ENCODE measurements at regions of chr2 and their contacts with region 1.

Region 1: DNA sequence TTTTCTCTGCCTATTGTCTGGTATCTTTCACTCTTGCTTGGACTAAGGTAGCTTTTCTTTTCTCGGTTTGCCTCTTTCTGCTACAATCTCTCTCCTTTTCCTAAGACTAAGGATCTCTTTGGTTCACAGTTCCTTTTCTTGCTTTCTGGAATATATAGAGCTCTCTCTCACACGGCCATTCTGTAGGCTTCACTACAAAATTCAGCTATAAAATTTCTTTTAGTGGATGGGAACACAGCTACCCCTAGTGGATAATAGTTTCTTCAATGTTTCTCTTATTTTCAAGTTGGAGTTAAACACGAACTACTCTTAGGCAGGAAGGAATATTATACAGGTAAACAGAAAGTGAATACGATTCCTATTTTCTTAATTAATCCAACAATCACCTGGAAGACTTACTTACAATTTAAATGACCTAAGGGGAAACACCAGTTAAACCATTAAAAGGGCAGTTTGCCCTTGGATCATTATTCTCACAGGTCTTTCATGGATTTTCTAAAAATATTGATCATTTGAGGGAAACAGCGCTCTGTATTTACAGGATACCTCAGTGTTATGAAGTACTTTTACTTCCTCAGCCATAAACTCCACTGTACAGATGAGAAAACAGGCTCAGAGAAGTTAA is 140.5 kb downstream of the LRP2 start:
- DNase-seq: no peak
- H3K4me3 Mint-ChIP-seq: no peak overlapping the region
- H3K27ac Mint-ChIP-seq: no peak overlapping the region
- H3K4me1 Mint-ChIP-seq: no peaks in the 10 kb centered on the region
- H3K27me3 Mint-ChIP-seq: no peaks in the 10 kb centered on the region
- CTCF ChIP-seq: peak; percentile 23

Region 2: GRCh38 chr2:169141713-169142352 is 80.0 kb before region 1 on chr2:
- CTCF ChIA-PET with region 1: interaction called, 6 read pairs
- intact Hi-C with region 1: loop called (anchors 5 kb)
- DNase-seq: peak; percentile 78
- H3K4me3 Mint-ChIP-seq: no peak overlapping the region
- H3K27ac Mint-ChIP-seq: no peak overlapping the region
- H3K4me1 Mint-ChIP-seq: peaks cover 7% of the 10 kb centered on the region
- H3K27me3 Mint-ChIP-seq: no peaks in the 10 kb centered on the region
- CTCF ChIP-seq: peak; percentile 86

Region 3: GRCh38 chr2:169184074-169184473 is 37.8 kb before region 1 on chr2:
- CTCF ChIA-PET with region 1: no interaction called
- intact Hi-C with region 1: no loop called
- DNase-seq: peak; percentile 3
- H3K4me3 Mint-ChIP-seq: no peak overlapping the region
- H3K27ac Mint-ChIP-seq: no peak overlapping the region
- H3K4me1 Mint-ChIP-seq: peaks cover 10% of the 10 kb centered on the region
- H3K27me3 Mint-ChIP-seq: peaks cover 6% of the 10 kb centered on the region
- CTCF ChIP-seq: no peak

Region 4: GRCh38 chr2:169275696-169276444 is 54.0 kb after region 1 on chr2:
- CTCF ChIA-PET with region 1: interaction called, 17 read pairs
- intact Hi-C with region 1: no loop called
- DNase-seq: peak; percentile 32
- H3K4me3 Mint-ChIP-seq: no peak overlapping the region
- H3K27ac Mint-ChIP-seq: no peak overlapping the region
- H3K4me1 Mint-ChIP-seq: no peaks in the 10 kb centered on the region
- H3K27me3 Mint-ChIP-seq: peaks cover 20% of the 10 kb centered on the region
- CTCF ChIP-seq: no peak

Region 5: DNA sequence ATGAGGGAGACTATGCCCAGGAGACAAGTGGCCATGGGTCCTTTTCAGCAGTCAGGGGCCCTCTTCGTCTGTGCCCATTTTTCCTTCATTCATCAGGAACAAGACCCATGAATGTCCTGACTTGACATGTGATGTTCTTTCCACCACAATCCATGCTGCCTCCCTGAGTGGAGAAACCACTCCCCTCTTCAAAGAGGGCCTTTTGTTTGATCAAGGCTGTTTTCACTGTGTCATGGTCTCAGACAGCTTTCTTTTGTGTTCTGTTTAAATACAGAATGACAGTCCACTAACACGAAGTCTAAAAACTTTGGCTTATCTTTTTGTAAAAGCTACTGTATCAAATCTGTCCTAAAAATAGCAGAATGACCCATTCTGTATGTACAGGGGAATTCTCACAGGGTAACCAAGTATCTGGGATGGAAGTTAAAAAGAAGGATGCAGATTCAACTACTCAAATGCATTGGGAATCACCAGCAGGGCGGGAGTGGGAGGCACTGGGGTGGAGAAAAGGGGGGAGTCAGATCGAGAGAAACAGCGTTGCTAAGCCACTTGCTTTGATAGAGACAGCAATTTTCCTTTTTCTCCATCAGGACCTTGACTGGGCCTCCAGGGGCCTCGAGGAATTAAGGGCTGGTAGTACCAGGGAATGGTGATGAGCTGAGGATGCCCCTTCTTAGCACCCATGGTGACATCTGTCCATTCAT is 126.6 kb after region 1 on chr2:
- CTCF ChIA-PET with region 1: no interaction called
- intact Hi-C with region 1: no loop called
- DNase-seq: no peak
- H3K4me3 Mint-ChIP-seq: no peak overlapping the region
- H3K27ac Mint-ChIP-seq: no peak overlapping the region
- H3K4me1 Mint-ChIP-seq: no peaks in the 10 kb centered on the region
- H3K27me3 Mint-ChIP-seq: no peaks in the 10 kb centered on the region
- CTCF ChIP-seq: no peak

Region 6: GRCh38 chr2:169363560-169364150 is 141.8 kb after region 1 on chr2:
- CTCF ChIA-PET with region 1: no interaction called
- intact Hi-C with region 1: no loop called
- DNase-seq: peak; percentile 38
- H3K4me3 Mint-ChIP-seq: peak overlapping the region; percentile 68
- H3K27ac Mint-ChIP-seq: no peak overlapping the region
- H3K4me1 Mint-ChIP-seq: peaks cover 35% of the 10 kb centered on the region
- H3K27me3 Mint-ChIP-seq: peaks cover 68% of the 10 kb centered on the region
- CTCF ChIP-seq: no peak